ENCODE measurements at regions of chr12 and their contacts with region 1.

Region 1: GRCh38 chr12:109858764-109859163 is 21.6 kb downstream of the GLTP start:
- DNase-seq: no peak
- H3K4me3 Mint-ChIP-seq: no peak overlapping the region
- H3K27ac Mint-ChIP-seq: no peak overlapping the region
- H3K4me1 Mint-ChIP-seq: peaks cover 5% of the 10 kb centered on the region
- H3K27me3 Mint-ChIP-seq: no peaks in the 10 kb centered on the region

Region 2: GRCh38 chr12:109899783-109900751 is 41.3 kb after region 1 on chr12 and contains the start of gene TCHP:
- intact Hi-C with region 1: loop called (anchors 10 kb)
- DNase-seq: peak; percentile 93
- H3K4me3 Mint-ChIP-seq: peak within 1 kb of the TSS; percentile 90
- H3K27ac Mint-ChIP-seq: peak within 1 kb of the TSS; percentile 98
- H3K4me1 Mint-ChIP-seq: peaks cover 17% of the 10 kb centered on the region
- H3K27me3 Mint-ChIP-seq: no peaks in the 10 kb centered on the region
- total RNA-seq, gene TCHP: 30.9 and 34.0 TPM in 2 replicates

Region 3: DNA sequence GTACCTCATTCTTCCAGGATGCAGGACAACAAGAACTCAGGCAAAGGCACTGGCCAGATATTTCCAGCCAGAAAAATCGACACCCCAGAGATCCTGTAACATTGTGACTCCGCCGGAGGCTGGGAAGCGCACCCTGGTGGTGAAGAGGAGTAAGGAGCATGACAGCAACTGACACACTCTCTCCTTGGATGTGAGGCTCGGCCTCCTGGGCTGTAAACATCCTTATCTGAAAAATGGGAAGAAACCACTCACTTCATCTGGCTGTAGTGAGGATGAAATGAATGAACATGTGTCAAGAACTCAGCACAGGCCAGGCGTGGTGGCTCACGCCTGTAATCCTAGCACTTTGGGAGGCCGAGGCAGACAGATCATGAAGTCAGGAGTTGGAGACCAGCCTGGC is 68.9 kb after region 1 on chr12:
- intact Hi-C with region 1: loop called (anchors 1 kb)
- DNase-seq: peak; percentile 79
- H3K4me3 Mint-ChIP-seq: no peak overlapping the region
- H3K27ac Mint-ChIP-seq: no peak overlapping the region
- H3K4me1 Mint-ChIP-seq: no peaks in the 10 kb centered on the region
- H3K27me3 Mint-ChIP-seq: no peaks in the 10 kb centered on the region

Measured in activated CD4-positive, alpha-beta T cell treated with anti-CD3 and anti-CD28 coated beads, Interleukin-2, amount 10 ng/mL, durations not matched to agents 24 days and 14 days (primary cell).